Activated CD4-positive, alpha-beta T cell treated with anti-CD3 and anti-CD28 coated beads, Interleukin-2, amount 10 ng/mL, durations not matched to agents 24 days and 14 days (primary cell): ENCODE measurements at regions of chr6 and their contacts with region 1.

Region 1: GRCh38 chr6:33425668-33426577 is 6.1 kb downstream of the SYNGAP1 start:
- DNase-seq: peak; percentile 93
- H3K4me3 Mint-ChIP-seq: peak overlapping the region; percentile 92
- H3K27ac Mint-ChIP-seq: peak overlapping the region; percentile 98
- H3K4me1 Mint-ChIP-seq: peaks cover 78% of the 10 kb centered on the region
- H3K27me3 Mint-ChIP-seq: no peaks in the 10 kb centered on the region

Region 2: DNA sequence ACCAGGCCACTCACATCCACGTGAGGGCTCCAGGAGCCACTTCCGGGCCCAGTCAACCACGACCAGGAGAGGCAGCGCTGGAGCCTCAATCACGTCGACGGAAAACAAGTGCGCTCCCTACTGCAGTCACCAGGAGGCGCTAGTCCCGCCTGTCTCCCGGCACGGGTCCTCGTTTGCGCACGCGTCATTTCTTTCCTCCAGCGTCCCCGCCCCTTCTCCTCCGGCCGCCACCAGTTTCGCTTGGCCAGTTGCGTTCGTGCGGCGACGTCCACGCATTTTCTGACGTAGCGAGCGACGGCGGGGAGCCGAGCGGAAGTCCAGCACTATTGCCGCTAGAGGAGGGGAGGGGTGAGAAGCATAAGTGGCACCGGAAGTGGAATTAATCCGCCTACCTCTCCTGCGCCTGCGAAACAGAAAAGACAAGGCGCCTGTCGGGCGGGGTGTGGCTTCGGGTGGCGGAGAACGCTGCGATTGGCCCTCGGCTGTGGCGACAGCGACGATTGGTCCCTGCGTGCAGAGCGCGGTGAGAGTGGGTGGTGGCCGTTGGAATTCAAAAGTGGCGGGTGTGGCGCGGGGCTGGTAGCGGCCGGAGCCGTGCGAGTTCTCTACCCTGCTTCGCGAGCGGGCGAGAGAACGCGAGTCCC is 34.5 kb before region 1 on chr6 and contains the start of gene KIFC1:
- intact Hi-C with region 1: loop called (anchors 1 kb)
- DNase-seq: peak; percentile 100
- H3K4me3 Mint-ChIP-seq: peak within 1 kb of the TSS; percentile 89
- H3K27ac Mint-ChIP-seq: peak within 1 kb of the TSS; percentile 97
- H3K4me1 Mint-ChIP-seq: peaks cover 42% of the 10 kb centered on the region
- H3K27me3 Mint-ChIP-seq: peaks cover 2% of the 10 kb centered on the region
- total RNA-seq, gene KIFC1: 64.9 and 66.5 TPM in 2 replicates